Activated naive CD8-positive, alpha-beta T cell treated with anti-CD3 and anti-CD28 coated beads, Interleukin-2, amount 10 ng/mL, durations not matched to agents 7 days and 5 days (primary cell): ENCODE measurements at regions of chr3 and their contacts with region 1.

Region 1: DNA sequence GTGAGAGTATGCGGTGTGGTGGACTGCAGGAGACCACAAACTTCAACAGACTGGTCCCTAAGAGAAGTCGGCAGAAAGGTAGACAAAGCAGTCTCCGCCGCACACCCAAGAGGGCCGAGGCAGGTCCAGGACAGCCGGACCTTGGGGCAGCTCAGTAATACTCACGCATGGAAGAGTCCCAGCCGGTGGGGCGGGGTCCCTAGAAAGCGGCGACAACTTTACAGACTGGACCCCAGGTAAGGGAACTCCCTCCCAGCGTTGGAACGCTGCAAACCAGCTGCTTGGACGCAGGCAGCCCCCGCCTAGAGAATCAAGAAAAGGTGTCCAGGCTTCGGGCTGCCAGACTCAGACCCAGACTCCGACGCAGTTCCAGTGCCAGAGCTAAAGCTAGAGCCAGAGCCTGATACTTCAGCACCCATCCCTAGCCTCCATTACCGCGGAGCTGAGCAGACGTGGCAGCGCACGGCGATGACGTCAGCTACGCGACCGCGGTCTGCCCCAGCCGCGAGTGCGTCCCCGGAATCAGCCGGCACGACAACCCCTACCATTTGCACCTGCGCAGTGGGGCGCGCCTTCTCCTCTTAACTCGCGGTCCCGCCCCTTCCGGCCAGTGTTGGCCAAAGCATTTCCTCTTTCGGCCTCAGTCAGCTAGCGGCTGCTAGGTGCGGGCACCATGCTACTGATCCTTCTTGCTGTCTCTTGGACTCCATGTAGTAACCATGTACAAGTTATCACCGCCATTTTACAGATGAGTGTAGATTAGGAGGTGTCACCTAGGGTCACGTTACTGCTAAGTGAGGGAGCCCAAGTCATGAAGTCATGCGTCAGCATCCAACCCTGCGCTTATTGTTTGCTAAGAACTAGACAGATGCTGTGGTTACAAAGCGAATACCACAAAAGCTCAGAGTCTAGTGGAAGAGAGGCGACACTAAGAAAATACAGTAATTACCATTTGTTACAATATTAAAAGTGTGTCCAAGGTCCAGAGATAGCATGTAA is at the start of gene TMEM39A:
- DNase-seq: peak; percentile 99
- ATAC-seq: peak; percentile 89
- H3K4me3 Mint-ChIP-seq: peak within 1 kb of the TSS; percentile 92
- H3K27ac Mint-ChIP-seq: peak within 1 kb of the TSS; percentile 99
- H3K4me1 Mint-ChIP-seq: peaks cover 40% of the 10 kb centered on the region
- H3K27me3 Mint-ChIP-seq: no peaks in the 10 kb centered on the region
- total RNA-seq, gene TMEM39A: 29.8 to 35.0 TPM

Region 2: DNA sequence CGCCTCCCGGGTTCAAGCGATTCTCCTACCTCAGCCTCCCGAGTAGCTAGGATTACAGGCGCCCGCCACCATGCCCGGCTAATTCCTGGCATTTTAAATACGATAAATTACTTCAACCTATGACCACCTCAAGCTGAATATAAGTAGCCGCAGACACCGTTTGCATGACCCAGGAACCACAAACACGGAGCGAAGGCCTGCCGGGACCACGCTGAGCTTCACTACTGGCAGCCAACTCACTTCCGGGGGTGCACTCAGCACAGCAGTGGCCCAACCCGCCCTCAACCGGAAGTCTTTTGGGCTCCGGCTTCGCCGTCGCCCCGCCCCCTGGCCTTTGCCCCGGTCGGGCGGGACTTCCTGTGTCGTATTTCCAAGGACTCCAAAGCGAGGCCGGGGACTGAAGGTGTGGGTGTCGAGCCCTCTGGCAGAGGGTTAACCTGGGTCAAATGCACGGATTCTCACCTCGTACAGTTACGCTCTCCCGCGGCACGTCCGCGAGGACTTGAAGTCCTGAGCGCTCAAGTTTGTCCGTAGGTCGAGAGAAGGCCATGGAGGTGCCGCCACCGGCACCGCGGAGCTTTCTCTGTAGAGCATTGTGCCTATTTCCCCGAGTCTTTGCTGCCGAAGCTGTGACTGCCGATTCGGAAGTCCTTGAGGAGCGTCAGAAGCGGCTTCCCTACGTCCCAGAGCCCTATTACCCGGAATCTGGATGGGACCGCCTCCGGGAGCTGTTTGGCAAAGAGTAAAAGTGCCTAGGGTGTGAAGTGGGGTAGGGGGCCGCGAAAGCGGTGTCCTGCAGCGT is 34.9 kb after region 1 on chr3 and contains the start of gene TIMMDC1:
- POLR2A ChIA-PET with region 1: interaction called, 56 read pairs
- DNase-seq: peak; percentile 97
- ATAC-seq: peak; percentile 98
- H3K4me3 Mint-ChIP-seq: peak within 1 kb of the TSS; percentile 99
- H3K27ac Mint-ChIP-seq: peak within 1 kb of the TSS; percentile 99
- H3K4me1 Mint-ChIP-seq: peaks cover 17% of the 10 kb centered on the region
- H3K27me3 Mint-ChIP-seq: no peaks in the 10 kb centered on the region
- total RNA-seq, gene TIMMDC1: 72.9 to 76.0 TPM

Region 3: DNA sequence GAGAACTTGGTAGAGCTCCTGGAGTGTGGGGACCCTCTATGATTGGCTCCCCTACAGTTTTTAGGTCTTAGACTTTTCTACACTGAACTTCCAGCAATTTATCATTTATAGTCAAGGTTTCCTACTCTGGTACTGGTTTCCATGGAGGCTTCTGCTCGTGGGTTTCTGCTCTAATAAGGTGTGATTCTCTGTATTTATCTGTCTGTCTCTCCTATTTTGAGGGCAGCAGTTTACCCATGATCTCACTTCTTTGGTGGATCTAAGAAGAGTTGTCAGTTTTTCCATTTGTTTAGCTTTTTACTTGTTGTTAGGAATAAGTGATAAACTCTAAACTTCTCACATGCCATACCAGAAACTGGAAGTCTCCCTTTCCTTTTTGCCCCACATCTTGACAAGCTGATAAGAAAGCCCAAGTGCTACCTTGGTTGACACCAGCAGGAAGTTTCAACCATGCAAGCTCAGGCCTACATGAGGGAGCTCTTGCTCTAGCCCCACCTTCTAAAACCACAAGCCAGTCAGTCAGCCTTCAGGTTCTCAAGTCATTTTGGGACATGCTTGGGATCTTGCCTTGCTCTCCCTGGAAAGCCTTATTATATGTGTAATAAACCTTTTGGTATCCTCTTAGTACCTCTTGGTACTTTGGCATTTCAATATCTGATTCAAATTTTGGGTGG is 44.8 kb after region 1 on chr3:
- POLR2A ChIA-PET with region 1: interaction called, 11 read pairs
- DNase-seq: no peak
- ATAC-seq: peak; percentile 95
- H3K4me3 Mint-ChIP-seq: peak overlapping the region; percentile 61
- H3K27ac Mint-ChIP-seq: peak overlapping the region; percentile 85
- H3K4me1 Mint-ChIP-seq: peaks cover 30% of the 10 kb centered on the region
- H3K27me3 Mint-ChIP-seq: no peaks in the 10 kb centered on the region

Region 4: GRCh38 chr3:119559441-119559963 is 96.0 kb after region 1 on chr3 and contains the start of gene CD80:
- POLR2A ChIA-PET with region 1: interaction called, 41 read pairs
- DNase-seq: peak; percentile 68
- ATAC-seq: peak; percentile 91
- H3K4me3 Mint-ChIP-seq: peak within 1 kb of the TSS; percentile 83
- H3K27ac Mint-ChIP-seq: peak within 1 kb of the TSS; percentile 85
- H3K4me1 Mint-ChIP-seq: peaks cover 46% of the 10 kb centered on the region
- H3K27me3 Mint-ChIP-seq: no peaks in the 10 kb centered on the region
- total RNA-seq, gene CD80: 11.6 to 15.2 TPM

Region 5: DNA sequence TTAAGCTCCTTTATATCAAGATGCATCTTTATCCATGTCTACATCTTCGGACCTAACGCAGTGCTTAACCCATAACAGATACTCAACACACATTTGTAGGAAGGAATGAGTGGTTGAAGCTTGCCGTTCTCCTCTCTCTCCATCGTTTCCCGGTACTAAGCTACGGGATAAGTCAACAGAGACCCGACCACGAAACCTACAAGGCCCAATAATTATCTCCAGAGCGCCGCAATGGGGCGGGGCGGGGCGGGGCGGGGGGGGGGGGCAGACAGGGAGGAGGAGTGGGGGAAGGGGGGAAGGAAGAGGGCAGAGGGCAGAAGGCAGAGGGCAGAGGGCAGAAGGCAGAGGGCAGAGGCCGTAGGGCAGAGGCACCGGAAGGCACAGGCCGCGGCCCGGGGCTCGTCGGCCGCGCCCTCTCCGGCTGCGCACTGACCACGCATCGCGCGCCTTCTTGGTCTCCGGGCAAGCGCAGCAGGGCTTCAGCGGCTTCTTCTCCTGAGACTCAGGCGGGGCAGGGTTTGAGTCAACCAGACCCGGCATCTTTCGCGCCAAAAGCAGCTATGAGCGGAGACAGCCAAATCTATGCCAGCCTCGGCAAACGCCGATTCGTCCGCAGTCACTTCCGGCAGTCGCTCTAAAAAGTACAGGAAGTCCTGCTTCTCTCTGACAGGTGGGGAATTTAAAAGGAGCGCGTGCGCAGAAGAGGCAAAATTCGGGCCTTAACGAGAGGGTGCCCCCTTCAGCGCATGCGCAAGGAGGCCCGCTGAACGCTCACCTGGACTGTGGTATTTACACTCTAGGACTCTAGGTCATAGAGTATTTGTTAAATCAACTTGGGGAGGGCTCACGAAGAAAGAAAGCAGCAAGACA is 213.5 kb after region 1 on chr3 and contains the start of gene COX17:
- POLR2A ChIA-PET with region 1: interaction called, 16 read pairs
- DNase-seq: peak; percentile 91
- ATAC-seq: peak; percentile 92
- H3K4me3 Mint-ChIP-seq: peak within 1 kb of the TSS; percentile 87
- H3K27ac Mint-ChIP-seq: peak within 1 kb of the TSS; percentile 97
- H3K4me1 Mint-ChIP-seq: peaks cover 32% of the 10 kb centered on the region
- H3K27me3 Mint-ChIP-seq: no peaks in the 10 kb centered on the region
- total RNA-seq, gene COX17: 55.7 to 59.9 TPM